A673 (cell line): ENCODE measurements at regions of chr7 and their contacts with region 1.

Region 1: GRCh38 chr7:137681657-137682562 is 164.9 kb downstream of the DGKI start:
- DNase-seq: no peak
- H3K4me3 ChIP-seq: no peak overlapping the region
- H3K27ac ChIP-seq: no peak overlapping the region
- H3K4me1 ChIP-seq: no peaks in the 10 kb centered on the region
- H3K27me3 ChIP-seq: no peaks in the 10 kb centered on the region
- CTCF ChIP-seq: no peak

Region 2: GRCh38 chr7:137703291-137704010 is 21.5 kb after region 1 on chr7:
- CTCF ChIA-PET with region 1: no interaction called
- POLR2A ChIA-PET with region 1: no interaction called
- intact Hi-C with region 1: loop called (anchors 2 kb)
- DNase-seq: no peak
- H3K4me3 ChIP-seq: no peak overlapping the region
- H3K27ac ChIP-seq: no peak overlapping the region
- H3K4me1 ChIP-seq: no peaks in the 10 kb centered on the region
- H3K27me3 ChIP-seq: no peaks in the 10 kb centered on the region
- CTCF ChIP-seq: no peak